ENCODE measurements at regions of chr1 and their contacts with region 1.

Region 1: GRCh38 chr1:205631727-205632373 is at the start of gene ELK4:
- DNase-seq: peak; percentile 96
- H3K4me3 ChIP-seq: peak within 1 kb of the TSS; percentile 73 to 87 (median 81)
- H3K27ac ChIP-seq: peak within 1 kb of the TSS; percentile 95
- H3K4me1 ChIP-seq: peaks cover 37% of the 10 kb centered on the region
- H3K27me3 ChIP-seq: no peaks in the 10 kb centered on the region
- CTCF ChIP-seq: peak; percentile 45 to 84
- total RNA-seq, gene ELK4: 17.7 to 38.6 TPM

Region 2: DNA sequence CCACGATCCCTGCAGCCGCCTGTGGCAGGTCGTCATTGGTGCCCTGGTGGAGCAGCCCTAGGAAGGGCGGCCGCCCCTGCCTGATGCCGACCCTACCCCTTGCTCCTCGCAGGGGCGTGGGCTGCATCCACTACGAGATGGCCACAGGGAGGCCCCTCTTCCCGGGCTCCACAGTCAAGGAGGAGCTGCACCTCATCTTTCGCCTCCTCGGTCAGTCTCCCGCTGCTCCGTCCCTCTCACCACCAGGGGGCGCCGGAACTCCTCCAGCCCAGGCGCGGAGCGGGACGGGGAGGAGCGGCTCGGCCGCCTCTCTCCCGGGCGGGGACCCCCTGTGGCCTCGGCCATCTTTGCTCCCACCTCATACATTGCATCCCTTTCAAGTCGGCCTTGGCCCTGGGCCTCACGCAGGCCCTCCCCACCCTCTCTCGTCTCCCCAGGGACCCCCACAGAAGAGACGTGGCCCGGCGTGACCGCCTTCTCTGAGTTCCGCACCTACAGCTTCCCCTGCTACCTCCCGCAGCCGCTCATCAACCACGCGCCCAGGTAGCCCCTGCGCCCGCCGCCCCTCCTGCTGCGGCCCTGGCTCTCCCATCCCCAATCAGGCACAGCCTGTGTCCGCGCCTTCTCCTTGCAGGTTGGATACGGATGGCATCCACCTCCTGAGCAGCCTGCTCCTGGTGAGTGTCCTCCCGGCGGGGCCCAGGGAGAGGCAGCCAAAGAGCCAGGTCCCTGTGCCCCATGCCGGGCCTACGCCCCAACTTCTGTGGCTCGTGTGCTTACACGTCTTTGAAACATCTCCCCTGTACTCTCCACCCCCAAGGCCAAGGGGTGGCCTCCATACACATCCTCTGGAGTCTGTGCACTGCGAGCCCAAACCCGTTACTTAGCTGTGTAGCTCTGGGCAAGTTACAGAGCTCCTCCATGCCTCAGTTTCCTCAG is 102.7 kb before region 1 on chr1:
- CTCF ChIA-PET with region 1: no interaction called
- dilution Hi-C with region 1: no loop called
- in situ Hi-C with region 1: no loop called
- intact Hi-C with region 1: loop called (anchors 2 kb)
- DNase-seq: peak; percentile 35
- H3K4me3 ChIP-seq: no peak overlapping the region
- H3K27ac ChIP-seq: no peak overlapping the region
- H3K4me1 ChIP-seq: no peaks in the 10 kb centered on the region
- H3K27me3 ChIP-seq: no peaks in the 10 kb centered on the region
- CTCF ChIP-seq: peak; percentile 72 to 91

Region 3: GRCh38 chr1:205543411-205544301 is 88.2 kb before region 1 on chr1:
- CTCF ChIA-PET with region 1: no interaction called
- dilution Hi-C with region 1: no loop called
- in situ Hi-C with region 1: no loop called
- intact Hi-C with region 1: loop called (anchors 5 kb)
- DNase-seq: peak; percentile 91
- H3K4me3 ChIP-seq: peak overlapping the region in 1 of 3 experiments; percentile 19
- H3K27ac ChIP-seq: peak overlapping the region; percentile 60
- H3K4me1 ChIP-seq: peaks cover 13% of the 10 kb centered on the region
- H3K27me3 ChIP-seq: no peaks in the 10 kb centered on the region
- CTCF ChIP-seq: no peak

Region 4: GRCh38 chr1:205591522-205592351 is 40.1 kb before region 1 on chr1:
- CTCF ChIA-PET with region 1: interaction called, 6 read pairs
- dilution Hi-C with region 1: loop called (anchors 5 kb)
- in situ Hi-C with region 1: loop called (anchors 5 kb)
- intact Hi-C with region 1: loop called (anchors 1 kb)
- DNase-seq: peak; percentile 98
- H3K4me3 ChIP-seq: peak overlapping the region in 1 of 3 experiments; percentile 25
- H3K27ac ChIP-seq: peak overlapping the region; percentile 26
- H3K4me1 ChIP-seq: peaks cover 21% of the 10 kb centered on the region
- H3K27me3 ChIP-seq: no peaks in the 10 kb centered on the region
- CTCF ChIP-seq: peak; percentile 90 to 99

Region 5: DNA sequence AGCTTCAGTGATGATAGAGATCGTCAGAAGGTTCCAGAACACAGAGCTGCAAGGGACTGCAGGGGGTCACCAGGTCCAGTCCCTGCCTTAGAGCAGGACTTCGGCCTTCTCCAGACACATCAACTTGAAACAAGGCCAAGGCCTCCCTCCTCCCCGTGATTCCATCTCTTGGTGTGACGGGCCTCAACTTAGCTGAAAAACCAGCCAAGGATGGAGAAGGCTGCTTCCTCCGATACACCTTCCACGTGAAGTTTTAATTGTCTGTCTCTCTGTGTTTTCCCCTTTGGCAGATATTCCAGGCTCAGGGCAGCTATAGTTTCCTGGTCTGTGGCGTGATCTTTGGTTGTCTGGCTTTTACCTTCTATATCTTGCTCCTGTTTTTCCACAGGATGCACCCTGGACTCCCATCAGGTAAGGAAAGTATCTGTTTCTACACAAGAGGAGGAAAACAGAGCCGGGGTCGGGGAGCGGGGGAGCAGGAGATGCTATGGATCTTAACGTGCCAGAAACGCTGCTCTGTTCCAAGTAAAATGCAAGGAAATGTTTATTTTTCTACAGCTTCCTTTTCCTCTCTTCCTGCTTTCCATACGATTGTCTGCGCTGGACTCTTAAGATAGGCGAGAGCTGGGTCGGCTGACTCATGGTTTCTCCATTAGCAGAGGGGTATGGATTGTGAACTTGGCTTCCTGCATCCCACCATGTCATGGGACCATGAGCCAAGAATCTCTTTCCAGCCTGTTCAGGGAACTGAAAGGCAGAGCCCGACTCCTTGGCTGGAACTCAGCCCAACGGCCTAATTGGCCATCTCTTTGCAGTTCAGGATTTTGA is 32.8 kb before region 1 on chr1:
- CTCF ChIA-PET with region 1: no interaction called
- dilution Hi-C with region 1: loop called (anchors 5 kb)
- in situ Hi-C with region 1: loop called (anchors 5 kb)
- intact Hi-C with region 1: no loop called
- DNase-seq: peak; percentile 22
- H3K4me3 ChIP-seq: no peak overlapping the region
- H3K27ac ChIP-seq: peak overlapping the region; percentile 2
- H3K4me1 ChIP-seq: peaks cover 40% of the 10 kb centered on the region
- H3K27me3 ChIP-seq: no peaks in the 10 kb centered on the region
- CTCF ChIP-seq: no peak

Region 6: GRCh38 chr1:206693029-206693428 is 1061.2 kb after region 1 on chr1:
- CTCF ChIA-PET with region 1: no interaction called
- dilution Hi-C with region 1: no loop called
- in situ Hi-C with region 1: no loop called
- intact Hi-C with region 1: no loop called
- DNase-seq: no peak
- H3K4me3 ChIP-seq: no peak overlapping the region
- H3K27ac ChIP-seq: no peak overlapping the region
- H3K4me1 ChIP-seq: peaks cover 20% of the 10 kb centered on the region
- H3K27me3 ChIP-seq: no peaks in the 10 kb centered on the region
- CTCF ChIP-seq: no peak

Measured in mammary epithelial cell (primary cell).